KBM-7 (cell line): ENCODE measurements at regions of chr2 and their contacts with region 1.

Region 1: GRCh38 chr2:46010925-46011490 is 286.2 kb upstream of the EPAS1 start:
- DNase-seq: peak; percentile 46

Region 2: DNA sequence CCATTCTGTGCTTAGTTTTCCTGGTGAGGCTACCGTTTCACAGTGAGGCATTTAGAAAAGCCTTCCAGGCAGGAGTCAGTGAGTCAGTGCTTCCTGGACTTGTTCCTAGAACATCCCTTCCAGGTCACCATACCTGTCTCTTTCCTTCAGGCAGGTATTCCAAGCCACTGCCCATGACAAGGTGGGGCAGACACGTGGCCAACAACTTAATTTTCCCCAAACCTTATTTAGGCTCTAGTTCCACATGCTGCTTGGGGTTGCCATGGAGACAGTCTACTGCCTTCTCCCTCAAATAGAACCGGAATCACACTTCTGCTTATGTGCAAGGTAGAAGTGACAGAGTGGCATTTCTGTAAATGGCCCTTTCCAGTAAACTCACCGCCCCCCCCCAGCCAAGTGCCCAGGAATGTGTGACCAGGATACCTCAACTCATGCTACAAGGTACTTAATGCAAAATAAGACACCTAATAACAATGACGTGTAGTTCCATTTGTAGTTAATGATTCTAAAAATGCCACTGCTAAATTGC is 101.3 kb before region 1 on chr2:
- in situ Hi-C with region 1: no loop called
- DNase-seq: peak; percentile 61

Region 3: GRCh38 chr2:46632349-46632748 is 621.3 kb after region 1 on chr2:
- in situ Hi-C with region 1: loop called (anchors 25 kb)
- DNase-seq: peak; percentile 63

Region 4: GRCh38 chr2:47016172-47016913 is 1005.3 kb after region 1 on chr2:
- in situ Hi-C with region 1: no loop called
- DNase-seq: peak; percentile 74